Endothelial cell of umbilical vein (primary cell): ENCODE measurements at regions of chr9 and their contacts with region 1.

Region 1: DNA sequence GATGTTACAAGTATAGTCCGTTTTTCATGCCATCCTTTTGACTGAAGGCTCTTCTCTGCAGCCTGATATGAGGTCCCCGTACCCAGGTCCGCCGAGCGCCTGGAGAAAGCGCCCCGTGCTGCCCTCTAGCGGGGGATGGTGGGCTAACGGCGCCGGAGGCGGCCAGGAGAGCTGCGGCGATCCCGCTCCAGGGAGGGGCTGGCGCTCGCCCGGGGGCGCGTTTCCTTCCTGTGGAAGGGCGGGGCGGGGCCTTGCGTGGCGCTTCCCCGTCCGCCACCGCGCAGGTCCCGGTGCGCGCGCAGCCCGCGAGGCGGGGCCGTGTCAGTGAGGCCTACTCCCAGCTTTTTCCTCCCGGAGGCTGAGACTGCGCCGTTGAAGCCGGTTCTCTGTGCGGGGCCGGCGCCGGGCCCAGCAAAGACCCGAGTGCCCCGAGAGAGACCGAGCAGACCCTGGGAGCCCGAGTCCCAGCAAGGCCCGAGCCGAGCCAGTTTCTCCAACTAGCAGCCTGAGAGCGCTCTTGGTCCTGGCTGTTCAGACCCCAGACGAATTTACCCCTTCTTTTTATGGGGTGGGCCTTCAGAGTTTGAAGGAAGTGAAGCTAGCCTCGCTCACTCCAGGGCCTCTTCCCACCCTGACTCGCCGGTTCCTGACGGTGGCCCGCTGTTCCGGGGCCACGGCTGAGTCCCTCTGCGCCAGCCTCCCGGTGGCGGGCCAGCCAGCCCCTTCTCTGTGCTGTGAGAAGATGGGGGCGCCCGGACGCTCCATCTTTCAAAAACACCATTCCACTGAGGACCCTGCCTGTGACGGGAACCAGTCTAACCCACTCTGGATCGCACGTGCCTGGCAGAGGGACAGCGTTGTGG is 9.7 kb upstream of the PHF2 start:
- DNase-seq: peak; percentile 98
- H3K4me3 ChIP-seq: peak overlapping the region; percentile 49 to 64 (median 52)
- H3K27ac ChIP-seq: peak overlapping the region; percentile 84
- H3K4me1 ChIP-seq: peaks cover 16% of the 10 kb centered on the region
- H3K27me3 ChIP-seq: no peaks in the 10 kb centered on the region
- CTCF ChIP-seq: peak; percentile 97 to 99
- POLR2A ChIP-seq: peak; percentile 98

Region 2: GRCh38 chr9:93319992-93320500 is 246.6 kb before region 1 on chr9:
- CTCF ChIA-PET with region 1: interaction called, 3 read pairs
- POLR2A ChIA-PET with region 1: no interaction called
- dilution Hi-C with region 1: no loop called
- intact Hi-C with region 1: loop called (anchors 10 kb)
- DNase-seq: no peak
- H3K4me3 ChIP-seq: no peak overlapping the region
- H3K27ac ChIP-seq: no peak overlapping the region
- H3K4me1 ChIP-seq: no peaks in the 10 kb centered on the region
- H3K27me3 ChIP-seq: peaks cover 0 to 2% of the 10 kb centered on the region in 2 experiments
- CTCF ChIP-seq: no peak
- POLR2A ChIP-seq: no peak

Region 3: DNA sequence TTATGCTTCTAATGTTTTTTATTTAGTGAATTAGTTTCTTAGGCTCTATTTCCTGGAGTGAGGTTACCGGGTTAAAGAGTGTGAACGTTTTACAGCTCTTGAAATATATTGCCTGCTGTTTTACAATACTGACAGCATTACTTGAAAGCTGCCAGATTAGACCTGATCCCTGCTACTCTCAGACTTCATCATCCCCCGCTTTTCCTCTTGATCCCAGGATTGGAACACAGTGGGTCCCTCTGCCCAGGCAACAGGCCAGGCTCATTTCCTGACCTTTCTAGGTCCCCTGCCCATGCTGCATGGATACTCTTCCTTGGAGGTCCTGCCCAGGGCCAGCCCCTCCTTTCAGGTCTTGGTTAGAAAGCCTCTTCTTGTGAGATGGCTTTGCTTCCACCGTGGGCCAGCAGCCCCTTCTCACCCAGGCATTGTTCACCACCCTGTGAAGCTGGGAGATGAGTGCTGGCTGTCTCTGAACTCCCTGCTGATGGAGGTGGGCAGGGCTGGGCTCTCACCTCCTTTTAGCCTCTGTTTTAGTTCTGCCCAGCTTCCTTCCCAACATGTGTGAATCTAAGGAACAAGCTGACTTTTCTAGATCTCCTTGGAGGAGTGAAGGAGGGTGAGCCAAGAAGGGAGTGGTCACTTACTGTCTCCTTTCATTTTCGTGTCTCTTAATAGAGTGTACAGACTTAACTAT is 97.7 kb before region 1 on chr9:
- CTCF ChIA-PET with region 1: interaction called, 18 read pairs
- POLR2A ChIA-PET with region 1: interaction called, 5 read pairs
- dilution Hi-C with region 1: no loop called
- intact Hi-C with region 1: no loop called
- DNase-seq: peak; percentile 36
- H3K4me3 ChIP-seq: no peak overlapping the region
- H3K27ac ChIP-seq: no peak overlapping the region
- H3K4me1 ChIP-seq: peaks cover 35% of the 10 kb centered on the region
- H3K27me3 ChIP-seq: no peaks in the 10 kb centered on the region
- CTCF ChIP-seq: no peak
- POLR2A ChIP-seq: no peak

Region 4: GRCh38 chr9:93536874-93537273 is 29.8 kb before region 1 on chr9:
- CTCF ChIA-PET with region 1: interaction called, 16 read pairs
- POLR2A ChIA-PET with region 1: no interaction called
- dilution Hi-C with region 1: no loop called
- intact Hi-C with region 1: no loop called
- DNase-seq: no peak
- H3K4me3 ChIP-seq: no peak overlapping the region
- H3K27ac ChIP-seq: no peak overlapping the region
- H3K4me1 ChIP-seq: no peaks in the 10 kb centered on the region
- H3K27me3 ChIP-seq: no peaks in the 10 kb centered on the region
- CTCF ChIP-seq: no peak
- POLR2A ChIP-seq: no peak

Region 5: GRCh38 chr9:93761822-93762221 is 195.2 kb after region 1 on chr9:
- CTCF ChIA-PET with region 1: no interaction called
- POLR2A ChIA-PET with region 1: no interaction called
- dilution Hi-C with region 1: no loop called
- intact Hi-C with region 1: no loop called
- DNase-seq: no peak
- H3K4me3 ChIP-seq: no peak overlapping the region
- H3K27ac ChIP-seq: no peak overlapping the region
- H3K4me1 ChIP-seq: no peaks in the 10 kb centered on the region
- H3K27me3 ChIP-seq: no peaks in the 10 kb centered on the region
- CTCF ChIP-seq: no peak
- POLR2A ChIP-seq: no peak

Region 6: GRCh38 chr9:93827545-93828330 is 261.1 kb after region 1 on chr9:
- CTCF ChIA-PET with region 1: no interaction called
- POLR2A ChIA-PET with region 1: no interaction called
- dilution Hi-C with region 1: no loop called
- intact Hi-C with region 1: no loop called
- DNase-seq: peak; percentile 73
- H3K4me3 ChIP-seq: peak overlapping the region in 1 of 3 experiments; percentile 31
- H3K27ac ChIP-seq: no peak overlapping the region
- H3K4me1 ChIP-seq: no peaks in the 10 kb centered on the region
- H3K27me3 ChIP-seq: no peaks in the 10 kb centered on the region
- CTCF ChIP-seq: peak; percentile 90 to 95
- POLR2A ChIP-seq: no peak